Calu3 (cell line): ENCODE measurements at regions of chr1 and their contacts with region 1.

Region 1: GRCh38 chr1:44641126-44642102 is 32.9 kb downstream of the TMEM53 start:
- DNase-seq: no peak
- H3K4me3 Mint-ChIP-seq: no peak overlapping the region
- H3K27ac Mint-ChIP-seq: no peak overlapping the region
- H3K4me1 Mint-ChIP-seq: no peaks in the 10 kb centered on the region
- H3K27me3 Mint-ChIP-seq: no peaks in the 10 kb centered on the region
- CTCF ChIP-seq: no peak

Region 2: GRCh38 chr1:44433209-44433608 is 208.2 kb before region 1 on chr1:
- CTCF ChIA-PET with region 1: no interaction called
- intact Hi-C with region 1: no loop called
- DNase-seq: no peak
- H3K4me3 Mint-ChIP-seq: no peak overlapping the region
- H3K27ac Mint-ChIP-seq: no peak overlapping the region
- H3K4me1 Mint-ChIP-seq: peaks cover 9% of the 10 kb centered on the region
- H3K27me3 Mint-ChIP-seq: peaks cover 18% of the 10 kb centered on the region
- CTCF ChIP-seq: no peak

Region 3: GRCh38 chr1:44631333-44631646 is 10.1 kb before region 1 on chr1:
- CTCF ChIA-PET with region 1: interaction called, 10 read pairs
- intact Hi-C with region 1: no loop called
- DNase-seq: no peak
- H3K4me3 Mint-ChIP-seq: peak overlapping the region; percentile 78
- H3K27ac Mint-ChIP-seq: peak overlapping the region; percentile 28
- H3K4me1 Mint-ChIP-seq: peaks cover 9% of the 10 kb centered on the region
- H3K27me3 Mint-ChIP-seq: no peaks in the 10 kb centered on the region
- CTCF ChIP-seq: no peak